Activated CD8-positive, alpha-beta memory T cell treated with anti-CD3 and anti-CD28 coated beads, Interleukin-2, amount 10 ng/mL, durations not matched to agents 7 days and 5 days (primary cell): ENCODE measurements at regions of chr12 and their contacts with region 1.

Region 1: GRCh38 chr12:48988030-48988649 is 10.0 kb downstream of the WNT1 start:
- DNase-seq: peak; percentile 82
- ATAC-seq: peak; percentile 88
- H3K4me3 Mint-ChIP-seq: no peak overlapping the region
- H3K27ac Mint-ChIP-seq: no peak overlapping the region
- H3K4me1 Mint-ChIP-seq: peaks cover 7% of the 10 kb centered on the region
- H3K27me3 Mint-ChIP-seq: peaks cover 66% of the 10 kb centered on the region

Region 2: GRCh38 chr12:48765753-48766162 is 222.4 kb before region 1 on chr12:
- CTCF ChIA-PET with region 1: no interaction called
- DNase-seq: peak; percentile 85
- ATAC-seq: peak; percentile 90
- H3K4me3 Mint-ChIP-seq: peak overlapping the region; percentile 35
- H3K27ac Mint-ChIP-seq: peak overlapping the region; percentile 59
- H3K4me1 Mint-ChIP-seq: peaks cover 26% of the 10 kb centered on the region
- H3K27me3 Mint-ChIP-seq: peaks cover 4% of the 10 kb centered on the region

Region 3: DNA sequence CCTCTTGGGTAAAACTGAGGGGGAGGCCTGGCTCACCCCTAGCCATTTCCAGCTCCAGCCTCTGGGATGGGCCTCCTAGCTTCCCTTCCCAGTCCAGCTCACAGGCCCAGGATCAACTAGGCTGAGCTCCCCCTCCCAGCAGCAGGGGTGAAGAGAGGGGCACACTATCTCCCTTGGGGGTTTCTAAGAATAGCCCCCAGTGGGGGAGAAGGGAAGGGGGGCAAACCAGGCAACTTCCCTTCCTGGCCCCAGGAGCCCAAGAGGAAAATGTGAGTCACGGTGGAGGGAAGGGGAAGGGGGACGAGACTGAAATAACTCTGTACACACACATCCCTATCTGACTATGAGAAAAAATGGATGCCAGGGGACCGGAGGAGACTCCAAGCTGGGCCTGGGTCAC is 208.3 kb before region 1 on chr12:
- CTCF ChIA-PET with region 1: no interaction called
- DNase-seq: no peak
- ATAC-seq: no peak
- H3K4me3 Mint-ChIP-seq: no peak overlapping the region
- H3K27ac Mint-ChIP-seq: no peak overlapping the region
- H3K4me1 Mint-ChIP-seq: no peaks in the 10 kb centered on the region
- H3K27me3 Mint-ChIP-seq: peaks cover 4% of the 10 kb centered on the region

Region 4: GRCh38 chr12:48903982-48904411 is 84.1 kb before region 1 on chr12:
- CTCF ChIA-PET with region 1: interaction called, 15 read pairs
- DNase-seq: peak; percentile 88
- ATAC-seq: peak; percentile 91
- H3K4me3 Mint-ChIP-seq: peak overlapping the region; percentile 38
- H3K27ac Mint-ChIP-seq: peak overlapping the region; percentile 68
- H3K4me1 Mint-ChIP-seq: peaks cover 19% of the 10 kb centered on the region
- H3K27me3 Mint-ChIP-seq: peaks cover 9% of the 10 kb centered on the region

Region 5: GRCh38 chr12:48924617-48925303 is 63.4 kb before region 1 on chr12:
- CTCF ChIA-PET with region 1: interaction called, 27 read pairs
- DNase-seq: peak; percentile 83
- ATAC-seq: peak; percentile 74
- H3K4me3 Mint-ChIP-seq: peak overlapping the region; percentile 92
- H3K27ac Mint-ChIP-seq: peak overlapping the region; percentile 95
- H3K4me1 Mint-ChIP-seq: peaks cover 43% of the 10 kb centered on the region
- H3K27me3 Mint-ChIP-seq: no peaks in the 10 kb centered on the region

Region 6: GRCh38 chr12:48936379-48936979 is 51.7 kb before region 1 on chr12:
- CTCF ChIA-PET with region 1: interaction called, 18 read pairs
- DNase-seq: peak; percentile 88
- ATAC-seq: peak; percentile 57
- H3K4me3 Mint-ChIP-seq: no peak overlapping the region
- H3K27ac Mint-ChIP-seq: peak overlapping the region; percentile 39
- H3K4me1 Mint-ChIP-seq: peaks cover 28% of the 10 kb centered on the region
- H3K27me3 Mint-ChIP-seq: no peaks in the 10 kb centered on the region

Region 7: GRCh38 chr12:49018261-49019119 is 30.4 kb after region 1 on chr12 and contains the start of gene PRKAG1:
- CTCF ChIA-PET with region 1: interaction called, 41 read pairs
- DNase-seq: peak; percentile 98
- ATAC-seq: peak; percentile 92
- H3K4me3 Mint-ChIP-seq: peak within 1 kb of the TSS; percentile 86
- H3K27ac Mint-ChIP-seq: peak within 1 kb of the TSS; percentile 97
- H3K4me1 Mint-ChIP-seq: peaks cover 28% of the 10 kb centered on the region
- H3K27me3 Mint-ChIP-seq: no peaks in the 10 kb centered on the region
- total RNA-seq, gene PRKAG1: 58.9 to 66.0 TPM

Region 8: DNA sequence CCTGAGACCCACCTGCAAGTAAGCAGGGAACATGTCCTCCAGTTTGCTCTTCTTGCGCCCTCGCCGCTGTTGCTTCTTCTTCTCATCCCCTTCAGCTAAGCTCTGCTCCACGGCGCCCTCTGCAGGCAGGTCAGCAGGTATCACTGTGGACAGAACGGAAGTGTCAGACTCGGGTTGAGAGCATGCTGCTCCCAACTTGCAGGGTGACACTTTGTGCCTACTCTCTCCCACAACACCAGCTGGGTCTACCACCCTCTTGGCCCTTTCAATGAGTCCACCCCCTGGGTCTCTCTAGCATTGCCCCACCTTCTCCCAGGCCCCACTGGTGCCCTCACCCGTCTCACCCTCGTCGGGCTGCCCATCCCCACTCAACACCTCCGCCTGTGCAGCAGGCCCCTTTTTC is 55.7 kb after region 1 on chr12:
- CTCF ChIA-PET with region 1: interaction called, 16 read pairs
- DNase-seq: peak; percentile 87
- ATAC-seq: peak; percentile 87
- H3K4me3 Mint-ChIP-seq: no peak overlapping the region
- H3K27ac Mint-ChIP-seq: peak overlapping the region; percentile 0
- H3K4me1 Mint-ChIP-seq: peaks cover 8% of the 10 kb centered on the region
- H3K27me3 Mint-ChIP-seq: no peaks in the 10 kb centered on the region

Region 9: GRCh38 chr12:49069507-49070346 is 81.6 kb after region 1 on chr12 and contains the start of gene RHEBL1:
- CTCF ChIA-PET with region 1: interaction called, 11 read pairs
- DNase-seq: peak; percentile 100
- ATAC-seq: peak; percentile 99
- H3K4me3 Mint-ChIP-seq: peak within 1 kb of the TSS; percentile 87
- H3K27ac Mint-ChIP-seq: peak within 1 kb of the TSS; percentile 92
- H3K4me1 Mint-ChIP-seq: peaks cover 29% of the 10 kb centered on the region
- H3K27me3 Mint-ChIP-seq: no peaks in the 10 kb centered on the region
- total RNA-seq, gene RHEBL1: 14.9 to 15.1 TPM